Gastrocnemius medialis (tissue), 4 donors: ENCODE measurements at regions of chr1 and their contacts with region 1.

Region 1: GRCh38 chr1:184075055-184076029 is 23.8 kb downstream of the TSEN15 start:
- DNase-seq: no peak
- ATAC-seq: peak; percentile 75 to 81
- H3K4me3 ChIP-seq: no peak overlapping the region
- H3K27ac ChIP-seq: peak overlapping the region; percentile 4 to 41 (median 34)
- H3K4me1 ChIP-seq: peaks cover 6% of the 10 kb centered on the region in 2 donors
- H3K27me3 ChIP-seq: no peaks in the 10 kb centered on the region
- CTCF ChIP-seq: peak; percentile 55 to 89 (median 78)
- POLR2A ChIP-seq: no peak

Region 2: GRCh38 chr1:184056921-184057496 is 18.3 kb before region 1 on chr1:
- in situ Hi-C with region 1: no loop called
- intact Hi-C with region 1: no loop called
- DNase-seq: no peak
- ATAC-seq: no peak
- H3K4me3 ChIP-seq: no peak overlapping the region
- H3K27ac ChIP-seq: peak overlapping the region in 3 of 4 donors; percentile 18 to 36 (median 24)
- H3K4me1 ChIP-seq: peaks cover 35 to 41% of the 10 kb centered on the region in 2 donors
- H3K27me3 ChIP-seq: no peaks in the 10 kb centered on the region
- CTCF ChIP-seq: no peak
- POLR2A ChIP-seq: no peak

Region 3: GRCh38 chr1:184222652-184223052 is 147.3 kb after region 1 on chr1:
- in situ Hi-C with region 1: loop called (anchors 5 to 10 kb)
- intact Hi-C with region 1: loop called (anchors 1 kb)
- DNase-seq: peak; percentile 28 to 34
- ATAC-seq: peak; percentile 49 to 70
- H3K4me3 ChIP-seq: peak overlapping the region; percentile 24 to 41 (median 30)
- H3K27ac ChIP-seq: no peak overlapping the region
- H3K4me1 ChIP-seq: no peaks in the 10 kb centered on the region
- H3K27me3 ChIP-seq: no peaks in the 10 kb centered on the region
- CTCF ChIP-seq: peak; percentile 81 to 95 (median 87)
- POLR2A ChIP-seq: no peak

Region 4: DNA sequence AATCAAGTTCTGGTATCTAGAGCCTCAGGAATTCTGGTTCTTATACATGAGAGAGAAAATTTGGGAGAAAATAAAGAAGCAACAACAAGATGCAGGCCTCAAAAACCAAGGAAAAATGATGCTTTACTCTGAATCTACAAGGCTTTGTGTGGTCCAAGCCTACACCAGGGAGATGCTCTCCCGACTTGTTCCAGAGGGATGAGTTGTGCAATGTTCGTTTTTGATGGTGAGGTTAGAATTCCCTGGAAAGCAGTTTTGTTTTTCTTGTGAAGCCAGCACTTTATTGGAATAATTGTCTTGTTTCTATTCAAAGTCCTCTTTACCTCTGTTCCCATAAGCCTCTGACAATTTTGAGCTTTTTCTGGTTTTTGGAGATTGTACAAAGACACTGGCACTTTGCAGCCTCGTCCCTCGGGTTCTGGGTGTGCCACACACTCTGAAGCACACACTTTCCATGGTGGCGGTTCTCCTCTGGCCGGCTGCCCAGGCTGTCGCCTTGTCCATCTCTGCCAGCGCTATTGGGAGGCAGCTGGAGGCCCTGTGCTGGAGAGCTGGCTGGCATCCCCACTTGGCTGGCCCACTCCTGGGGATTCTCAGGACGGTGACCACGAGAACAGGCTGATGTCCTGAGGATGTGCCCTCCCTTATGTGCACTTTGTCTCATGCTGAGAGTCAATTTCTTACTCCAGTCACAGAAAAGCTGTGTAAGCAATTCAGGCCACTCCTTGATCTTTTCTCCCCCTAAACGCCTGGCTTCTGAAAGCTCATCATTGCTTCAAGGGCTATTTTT is 609.1 kb after region 1 on chr1:
- in situ Hi-C with region 1: loop called (anchors 10 to 25 kb)
- intact Hi-C with region 1: no loop called
- DNase-seq: no peak
- ATAC-seq: peak in 1 of 2 donors; percentile 34
- H3K4me3 ChIP-seq: no peak overlapping the region
- H3K27ac ChIP-seq: no peak overlapping the region
- H3K4me1 ChIP-seq: no peaks in the 10 kb centered on the region
- H3K27me3 ChIP-seq: no peaks in the 10 kb centered on the region
- CTCF ChIP-seq: no peak
- POLR2A ChIP-seq: no peak

Region 5: DNA sequence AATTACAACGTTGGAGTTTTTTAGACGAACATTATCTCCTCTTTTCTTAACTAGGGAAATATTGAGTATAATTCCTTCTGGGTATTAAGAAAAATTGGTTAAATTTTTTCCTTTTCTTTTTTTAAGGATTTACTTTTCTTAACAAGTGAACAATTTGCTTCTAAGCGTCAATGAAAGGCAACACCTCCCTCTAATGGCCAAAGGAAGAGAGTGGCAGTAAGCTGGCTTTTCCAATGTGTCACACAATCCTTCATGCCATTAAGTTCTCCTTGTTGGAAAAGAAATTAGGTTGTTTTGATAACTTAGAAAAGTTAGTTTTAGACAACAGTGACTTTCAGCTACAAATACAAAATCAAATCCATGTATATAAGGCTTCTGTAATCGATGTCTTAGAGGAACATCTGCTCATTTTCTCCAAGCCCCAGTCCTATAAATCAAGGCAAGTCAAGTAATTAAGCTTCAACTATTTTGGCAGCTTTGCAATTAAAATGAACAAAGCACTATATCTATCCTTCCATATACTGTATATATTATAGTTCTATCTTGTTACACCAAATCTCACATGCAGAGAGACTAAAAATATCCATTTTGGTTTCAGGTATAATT is 616.5 kb after region 1 on chr1:
- in situ Hi-C with region 1: loop called (anchors 10 to 25 kb)
- intact Hi-C with region 1: loop called (anchors 1 kb)
- DNase-seq: no peak
- ATAC-seq: peak; percentile 59 to 73
- H3K4me3 ChIP-seq: no peak overlapping the region
- H3K27ac ChIP-seq: no peak overlapping the region
- H3K4me1 ChIP-seq: no peaks in the 10 kb centered on the region
- H3K27me3 ChIP-seq: no peaks in the 10 kb centered on the region
- CTCF ChIP-seq: peak; percentile 50 to 86 (median 76)
- POLR2A ChIP-seq: no peak